ENCODE measurements at regions of chr9 and their contacts with region 1.

Region 1: GRCh38 chr9:123401879-123402513 is 46.0 kb downstream of the CRB2 start:
- DNase-seq: peak; percentile 68
- H3K4me3 ChIP-seq: no peak overlapping the region
- H3K27ac ChIP-seq: no peak overlapping the region
- H3K4me1 ChIP-seq: peaks cover 11% of the 10 kb centered on the region
- H3K27me3 ChIP-seq: no peaks in the 10 kb centered on the region
- CTCF ChIP-seq: peak; percentile 86

Region 2: DNA sequence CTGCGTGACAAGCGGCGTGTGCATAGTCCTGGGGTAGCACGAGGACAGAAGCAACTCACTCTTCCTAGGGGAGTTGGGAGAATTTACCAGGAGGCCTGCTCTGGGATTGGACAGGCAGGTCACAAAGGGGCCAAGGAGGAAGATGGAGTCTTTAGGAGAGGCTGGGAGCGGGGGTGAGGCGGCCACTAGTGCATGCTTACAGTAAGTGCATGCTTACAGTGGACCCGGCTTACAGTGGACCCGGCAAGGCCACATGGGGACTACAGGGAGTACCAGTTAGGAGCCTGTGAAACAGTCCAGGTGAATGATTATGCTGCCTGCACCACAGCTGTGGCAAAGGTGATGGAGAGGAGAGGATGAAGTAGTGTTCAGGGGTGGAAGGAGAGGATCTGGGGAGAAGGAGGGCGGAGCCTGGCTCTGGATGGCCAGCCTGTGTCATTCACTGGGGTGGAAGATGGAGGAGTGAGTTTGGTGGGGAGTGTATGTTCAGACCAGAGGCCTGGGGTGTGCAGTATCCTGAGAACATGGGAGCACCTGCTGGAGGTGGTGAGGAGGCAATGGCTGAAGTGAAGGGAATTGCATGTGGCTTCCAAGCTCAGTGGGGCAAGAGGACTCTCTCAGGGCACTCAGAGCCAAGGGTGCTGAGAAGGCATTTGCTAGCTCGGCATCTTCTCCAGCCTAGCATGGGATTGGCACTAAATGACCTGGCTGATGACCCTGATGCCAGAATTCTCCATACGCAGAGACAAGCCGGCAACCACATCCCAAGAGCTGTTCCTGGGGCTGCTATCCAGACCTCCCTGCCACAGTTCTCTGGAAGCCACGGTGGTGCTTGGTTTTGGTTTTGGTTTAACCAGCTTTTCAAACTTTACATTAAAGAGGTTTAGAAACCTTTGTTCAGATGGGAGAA is 32.9 kb after region 1 on chr9:
- CTCF ChIA-PET with region 1: interaction called, 10 read pairs
- POLR2A ChIA-PET with region 1: no interaction called
- intact Hi-C with region 1: no loop called
- DNase-seq: no peak
- H3K4me3 ChIP-seq: no peak overlapping the region
- H3K27ac ChIP-seq: no peak overlapping the region
- H3K4me1 ChIP-seq: no peaks in the 10 kb centered on the region
- H3K27me3 ChIP-seq: no peaks in the 10 kb centered on the region
- CTCF ChIP-seq: no peak

Region 3: DNA sequence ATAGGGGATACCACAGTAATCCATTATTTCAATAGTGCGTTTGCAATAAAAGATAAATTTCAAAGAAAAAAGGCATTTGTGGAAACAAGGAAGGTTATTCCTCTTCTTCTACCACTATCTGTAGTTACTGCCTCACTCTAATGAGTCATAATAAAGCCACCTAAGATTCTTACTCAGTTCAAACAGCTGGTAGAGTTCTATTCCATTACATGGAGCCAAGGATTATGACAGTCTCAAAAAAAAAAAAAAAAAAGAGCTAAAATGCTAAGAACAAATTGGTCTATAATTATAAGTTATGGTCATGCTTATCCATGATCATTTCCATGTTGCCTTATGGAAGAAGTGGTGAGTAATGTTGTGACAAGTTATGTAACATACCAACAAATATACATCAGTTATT is 481.6 kb after region 1 on chr9:
- CTCF ChIA-PET with region 1: no interaction called
- POLR2A ChIA-PET with region 1: no interaction called
- intact Hi-C with region 1: no loop called
- DNase-seq: no peak
- H3K4me3 ChIP-seq: no peak overlapping the region
- H3K27ac ChIP-seq: no peak overlapping the region
- H3K4me1 ChIP-seq: no peaks in the 10 kb centered on the region
- H3K27me3 ChIP-seq: peaks cover 28% of the 10 kb centered on the region
- CTCF ChIP-seq: no peak

Region 4: DNA sequence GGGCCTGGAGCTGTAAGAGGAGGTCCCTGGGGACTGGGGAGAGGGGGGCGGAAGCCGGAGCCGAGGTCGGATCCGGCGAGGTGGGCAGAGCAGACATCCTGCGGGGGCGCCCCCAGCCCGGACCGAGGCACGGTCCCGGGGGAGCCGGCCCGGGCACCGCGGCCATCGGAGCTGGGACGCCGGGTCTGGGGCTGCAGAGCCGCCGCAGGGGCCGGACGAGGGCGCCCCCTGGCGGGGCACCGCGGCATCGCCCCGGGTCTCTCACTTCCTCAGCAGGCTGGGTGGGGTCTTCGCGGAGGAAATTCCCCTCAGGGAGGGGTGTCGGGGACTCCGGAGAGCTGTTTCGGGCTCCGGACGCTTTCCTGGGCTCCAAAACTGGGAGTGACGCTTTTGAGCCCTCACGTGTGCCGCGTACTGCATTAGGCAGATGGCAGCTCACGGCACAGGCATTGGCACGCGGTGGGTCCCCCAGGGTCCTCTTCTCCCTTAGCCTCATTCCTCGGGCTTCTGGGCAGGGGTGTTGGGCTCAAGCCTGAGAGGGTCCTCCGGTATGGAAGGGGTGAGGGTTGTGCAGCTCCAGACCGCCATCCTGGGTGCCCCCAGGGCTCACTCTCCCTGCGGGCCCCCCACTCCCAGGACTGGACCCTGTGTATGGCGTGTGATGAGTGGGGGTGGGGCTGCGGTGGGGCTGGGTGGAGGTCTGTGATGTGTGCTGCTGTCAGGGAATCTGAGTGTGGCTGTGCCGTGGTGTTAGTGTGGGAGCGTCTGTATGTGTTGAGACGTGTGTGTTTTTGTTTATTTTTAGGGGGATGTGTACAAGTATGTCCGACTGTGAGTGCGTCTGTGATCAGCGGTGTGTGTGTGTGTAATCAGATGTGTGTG is 639.2 kb after region 1 on chr9:
- CTCF ChIA-PET with region 1: no interaction called
- POLR2A ChIA-PET with region 1: no interaction called
- intact Hi-C with region 1: loop called (anchors 5 kb)
- DNase-seq: no peak
- H3K4me3 ChIP-seq: peak overlapping the region; percentile 31
- H3K27ac ChIP-seq: no peak overlapping the region
- H3K4me1 ChIP-seq: no peaks in the 10 kb centered on the region
- H3K27me3 ChIP-seq: peaks cover 15% of the 10 kb centered on the region
- CTCF ChIP-seq: peak; percentile 83

Region 5: DNA sequence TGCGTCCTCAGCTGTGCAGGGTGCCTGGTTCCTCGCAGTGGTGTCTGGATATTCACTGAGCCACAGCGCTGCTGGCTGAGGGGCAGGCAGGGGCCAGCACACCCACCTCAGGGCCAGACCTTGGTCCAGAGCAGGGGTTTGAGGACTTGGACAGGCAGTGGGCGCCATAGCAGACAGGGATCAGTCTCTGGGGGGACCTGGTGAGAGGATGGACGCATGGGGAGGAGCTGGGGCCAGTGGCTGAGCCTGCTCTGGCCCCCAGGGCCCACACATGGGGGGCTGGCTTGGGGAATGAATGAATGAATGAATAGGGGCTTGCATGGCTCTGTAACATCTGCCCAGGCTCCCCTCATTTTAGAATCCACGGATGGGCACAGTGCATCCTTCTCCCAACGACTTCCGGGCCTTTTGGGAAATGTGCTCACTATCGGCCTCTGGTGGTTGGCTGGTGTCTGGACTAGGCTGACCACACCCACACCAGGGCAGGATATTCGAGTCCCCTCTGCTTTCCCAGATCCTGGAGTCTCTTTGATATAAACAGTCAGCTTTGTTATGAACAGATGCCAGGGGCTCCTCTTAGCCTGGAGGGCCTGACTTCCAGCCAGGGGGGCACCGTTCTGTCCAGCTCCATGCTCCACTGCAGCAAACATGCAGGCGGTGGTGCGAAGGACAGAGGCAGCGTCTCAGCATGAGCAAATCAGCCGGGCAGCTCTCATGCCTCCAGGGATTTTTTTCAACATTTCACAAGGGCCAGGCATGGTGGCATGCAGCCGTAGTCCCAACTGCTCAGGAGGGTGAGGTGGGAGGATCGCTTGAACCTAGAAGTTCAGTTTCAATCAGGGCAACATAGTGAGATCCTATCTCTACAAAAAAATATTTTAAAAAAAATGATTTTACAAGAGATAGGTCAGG is 918.3 kb after region 1 on chr9:
- CTCF ChIA-PET with region 1: no interaction called
- POLR2A ChIA-PET with region 1: no interaction called
- intact Hi-C with region 1: loop called (anchors 10 kb)
- DNase-seq: peak; percentile 80
- H3K4me3 ChIP-seq: no peak overlapping the region
- H3K27ac ChIP-seq: no peak overlapping the region
- H3K4me1 ChIP-seq: no peaks in the 10 kb centered on the region
- H3K27me3 ChIP-seq: no peaks in the 10 kb centered on the region
- CTCF ChIP-seq: peak; percentile 89